IMR-90 (cell line): ENCODE measurements at regions of chr18 and their contacts with region 1.

Region 1: GRCh38 chr18:50819728-50820378 is at the start of gene MRO:
- DNase-seq: peak; percentile 60
- ATAC-seq: peak; percentile 97
- H3K4me3 ChIP-seq: peak within 1 kb of the TSS; percentile 26
- H3K27ac ChIP-seq: no peak within 1 kb of the TSS
- H3K4me1 ChIP-seq: no peaks in the 10 kb centered on the region
- H3K27me3 ChIP-seq: peaks cover 6% of the 10 kb centered on the region
- CTCF ChIP-seq: peak; percentile 94
- POLR2A ChIP-seq: 0 out of 2 replicates have a peak, but pooled peaks have one; percentile 38
- RAD21 ChIP-seq: peak; percentile 96
- total RNA-seq, gene MRO: not detected in 2 replicates

Region 2: DNA sequence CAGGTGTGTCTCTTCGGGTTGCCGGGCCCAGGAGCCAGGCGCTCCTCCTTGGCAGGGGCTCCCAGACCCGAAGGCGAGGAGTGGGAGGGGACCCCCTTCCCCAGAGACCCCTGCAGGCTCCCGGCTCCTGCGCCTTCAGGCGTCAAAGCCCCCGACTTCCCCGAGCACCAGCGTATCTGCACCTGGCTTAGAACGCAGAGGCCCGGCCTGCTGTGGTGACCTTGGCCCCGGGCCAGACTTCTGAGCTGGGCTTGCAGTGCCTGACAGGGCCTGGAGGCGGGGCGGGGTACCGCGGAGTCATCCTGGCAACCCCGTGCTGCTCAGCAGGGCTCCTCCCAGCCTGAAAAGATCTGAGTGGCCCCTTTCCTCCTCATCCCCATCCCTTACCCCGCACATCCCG is 418.0 kb before region 1 on chr18:
- CTCF ChIA-PET with region 1: no interaction called
- POLR2A ChIA-PET with region 1: no interaction called
- dilution Hi-C with region 1: no loop called
- in situ Hi-C with region 1: no loop called
- intact Hi-C with region 1: no loop called
- DNase-seq: peak; percentile 7
- ATAC-seq: peak; percentile 29; the same call in 1 of the 2 replicates
- H3K4me3 ChIP-seq: no peak overlapping the region
- H3K27ac ChIP-seq: no peak overlapping the region
- H3K4me1 ChIP-seq: no peaks in the 10 kb centered on the region
- H3K27me3 ChIP-seq: peaks cover 20% of the 10 kb centered on the region
- CTCF ChIP-seq: no peak
- POLR2A ChIP-seq: no peak
- RAD21 ChIP-seq: no peak

Region 3: DNA sequence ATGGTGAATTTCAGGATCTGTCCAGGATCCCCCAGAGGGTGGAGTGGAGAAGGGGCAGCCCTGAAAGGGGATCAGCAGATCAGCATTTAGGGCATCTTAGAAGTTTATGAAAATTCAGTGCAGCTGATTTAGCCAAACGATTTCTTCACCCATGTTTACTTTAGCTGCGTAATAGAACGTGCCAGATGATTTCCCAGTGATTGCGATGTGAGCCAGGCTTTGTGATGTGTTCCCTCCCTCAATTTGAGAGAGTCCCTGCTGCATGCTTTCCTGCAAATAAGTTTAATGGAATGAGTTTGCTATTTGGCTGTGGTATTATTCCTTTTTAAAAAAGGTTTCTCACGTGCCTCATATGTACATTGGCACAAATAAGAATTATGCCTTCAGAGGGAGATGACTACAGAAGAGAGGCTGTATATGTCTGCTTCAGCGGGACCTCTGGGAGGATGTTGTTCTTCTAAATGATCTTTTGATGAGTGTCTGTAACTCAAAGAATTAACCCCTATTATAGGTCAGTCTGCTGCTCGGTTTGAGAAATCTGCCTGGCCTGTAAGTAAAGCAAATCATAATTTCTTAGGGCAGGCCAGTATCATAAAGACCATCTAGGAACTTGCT is 111.9 kb before region 1 on chr18:
- CTCF ChIA-PET with region 1: no interaction called
- POLR2A ChIA-PET with region 1: no interaction called
- dilution Hi-C with region 1: no loop called
- in situ Hi-C with region 1: no loop called
- intact Hi-C with region 1: no loop called
- DNase-seq: peak; percentile 14
- ATAC-seq: peak; percentile 35
- H3K4me3 ChIP-seq: no peak overlapping the region
- H3K27ac ChIP-seq: no peak overlapping the region
- H3K4me1 ChIP-seq: no peaks in the 10 kb centered on the region
- H3K27me3 ChIP-seq: no peaks in the 10 kb centered on the region
- CTCF ChIP-seq: no peak
- POLR2A ChIP-seq: no peak
- RAD21 ChIP-seq: no peak

Region 4: GRCh38 chr18:50866765-50867164 is 46.9 kb after region 1 on chr18:
- CTCF ChIA-PET with region 1: no interaction called
- POLR2A ChIA-PET with region 1: no interaction called
- dilution Hi-C with region 1: no loop called
- in situ Hi-C with region 1: no loop called
- intact Hi-C with region 1: loop called (anchors 2 kb)
- DNase-seq: no peak
- ATAC-seq: 0 out of 2 replicates have a peak, but pooled peaks have one; percentile 31
- H3K4me3 ChIP-seq: no peak overlapping the region
- H3K27ac ChIP-seq: no peak overlapping the region
- H3K4me1 ChIP-seq: peaks cover 3% of the 10 kb centered on the region; the same call in 1 of the 2 replicates
- H3K27me3 ChIP-seq: no peaks in the 10 kb centered on the region
- CTCF ChIP-seq: 0 out of 2 replicates have a peak, but pooled peaks have one; percentile 7
- POLR2A ChIP-seq: no peak
- RAD21 ChIP-seq: no peak

Region 5: DNA sequence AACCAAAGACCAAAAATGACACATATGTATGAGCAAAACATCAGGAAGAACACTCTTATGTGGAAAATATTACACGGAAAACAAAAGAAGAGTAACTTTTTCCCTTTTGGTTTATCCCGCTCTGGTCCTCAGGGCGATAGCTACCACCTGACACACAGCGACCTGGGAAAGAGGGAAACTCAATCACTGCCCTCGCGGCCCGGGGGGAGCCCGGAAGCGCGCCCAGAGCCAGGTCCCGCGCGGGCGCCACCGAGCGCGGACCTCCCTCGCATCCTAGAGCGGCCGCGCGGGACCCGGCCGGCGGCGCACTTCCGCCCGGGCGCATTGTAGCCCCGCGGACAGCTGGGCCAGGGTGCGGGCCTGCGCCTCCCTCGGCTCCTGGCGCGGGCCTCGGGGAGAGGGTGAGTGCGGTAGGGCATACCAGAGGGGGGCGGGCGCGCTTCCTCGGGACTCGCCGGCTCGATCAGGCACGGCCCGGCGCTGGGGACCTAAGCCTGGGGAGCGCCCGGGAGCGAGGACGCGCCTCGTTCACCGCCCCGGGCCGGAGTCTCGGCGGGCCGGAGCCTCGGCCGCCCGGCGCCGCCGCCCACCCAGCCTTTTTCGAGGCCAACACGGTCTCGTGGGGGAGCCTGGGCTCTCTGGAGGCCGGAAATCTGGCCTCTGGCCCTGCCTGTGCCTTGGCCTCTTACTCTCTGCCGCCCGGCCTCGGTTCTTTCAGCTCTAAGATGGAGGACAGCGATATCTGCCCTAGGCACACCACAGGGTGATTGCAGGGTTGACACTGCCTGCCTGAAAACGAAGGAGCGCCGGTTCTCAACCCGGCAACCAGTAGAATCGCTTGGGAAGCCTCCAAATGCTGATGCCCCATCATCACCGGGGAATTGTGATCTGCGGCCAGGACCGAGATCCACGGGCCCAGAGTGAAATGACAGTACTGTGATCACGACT is 148.1 kb after region 1 on chr18 and contains the start of gene ELAC1:
- CTCF ChIA-PET with region 1: no interaction called
- POLR2A ChIA-PET with region 1: no interaction called
- dilution Hi-C with region 1: no loop called
- in situ Hi-C with region 1: no loop called
- intact Hi-C with region 1: loop called (anchors 2 kb)
- DNase-seq: peak; percentile 76
- ATAC-seq: peak; percentile 97
- H3K4me3 ChIP-seq: peak within 1 kb of the TSS; percentile 61
- H3K27ac ChIP-seq: peak within 1 kb of the TSS; percentile 83
- H3K4me1 ChIP-seq: peaks cover 3% of the 10 kb centered on the region; the same call in 1 of the 2 replicates
- H3K27me3 ChIP-seq: no peaks in the 10 kb centered on the region
- CTCF ChIP-seq: 0 out of 2 replicates have a peak, but pooled peaks have one; percentile 0
- POLR2A ChIP-seq: peak; percentile 92
- RAD21 ChIP-seq: no peak
- total RNA-seq, gene ELAC1: 5.2 and 6.4 TPM in 2 replicates

Region 6: GRCh38 chr18:51029694-51030536 is 210.1 kb after region 1 on chr18 and contains the start of gene SMAD4:
- CTCF ChIA-PET with region 1: interaction called, 3 read pairs
- POLR2A ChIA-PET with region 1: no interaction called
- dilution Hi-C with region 1: no loop called
- in situ Hi-C with region 1: no loop called
- intact Hi-C with region 1: loop called (anchors 5 kb)
- DNase-seq: peak; percentile 94
- ATAC-seq: peak; percentile 95
- H3K4me3 ChIP-seq: peak within 1 kb of the TSS; percentile 78
- H3K27ac ChIP-seq: peak within 1 kb of the TSS; percentile 96
- H3K4me1 ChIP-seq: peaks cover 5% of the 10 kb centered on the region
- H3K27me3 ChIP-seq: no peaks in the 10 kb centered on the region
- CTCF ChIP-seq: no peak
- POLR2A ChIP-seq: peak; percentile 90
- RAD21 ChIP-seq: no peak
- total RNA-seq, gene SMAD4: 145 and 194 TPM in 2 replicates

Region 7: DNA sequence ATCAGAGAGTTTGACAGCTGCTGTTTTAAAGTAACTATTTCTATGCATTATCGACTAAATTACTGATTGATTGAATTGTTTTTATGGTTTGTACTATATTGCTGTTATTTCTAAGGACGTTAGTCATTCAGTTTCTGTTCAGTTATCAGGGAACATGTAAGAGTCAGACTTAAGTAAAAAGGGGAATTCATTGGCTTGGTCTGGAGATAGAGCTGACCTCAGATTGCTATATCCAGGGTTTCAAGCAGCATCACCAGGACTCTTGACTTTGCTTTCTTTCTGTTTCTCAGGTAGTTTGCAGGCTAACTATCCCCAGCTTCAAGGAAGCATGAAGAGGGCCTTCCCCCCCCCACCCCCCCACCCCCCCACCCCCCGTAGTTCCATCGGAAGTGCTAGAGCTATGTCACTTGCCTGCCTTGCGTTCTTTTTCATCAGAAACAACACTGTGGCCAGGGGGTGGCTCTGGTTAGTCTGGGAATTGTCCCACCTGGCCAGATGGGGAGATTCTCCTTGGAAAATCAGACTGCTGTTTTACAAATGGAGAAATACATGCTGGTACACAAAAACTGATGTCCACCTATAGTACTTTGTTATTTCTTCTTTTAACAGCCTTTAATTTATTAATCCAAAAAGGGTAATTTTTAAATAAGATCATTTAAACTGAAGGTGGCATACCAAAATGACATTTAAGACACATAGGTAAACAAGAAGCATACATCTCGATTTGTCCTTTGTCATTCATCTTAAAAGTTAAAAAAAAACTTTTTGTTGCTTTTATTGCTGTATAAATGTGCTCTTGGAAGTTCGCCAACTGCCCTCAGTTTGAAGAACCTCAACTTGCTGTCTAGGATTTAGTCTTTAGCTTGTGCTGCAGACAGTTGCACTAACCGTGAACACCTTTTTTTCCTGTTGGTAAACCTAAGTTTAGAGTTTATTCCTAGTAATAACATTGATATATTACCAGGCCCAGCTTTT is 219.6 kb after region 1 on chr18:
- CTCF ChIA-PET with region 1: no interaction called
- POLR2A ChIA-PET with region 1: no interaction called
- dilution Hi-C with region 1: no loop called
- in situ Hi-C with region 1: loop called (anchors 10 kb)
- intact Hi-C with region 1: loop called (anchors 5 kb)
- DNase-seq: peak; percentile 46
- ATAC-seq: no peak
- H3K4me3 ChIP-seq: no peak overlapping the region
- H3K27ac ChIP-seq: no peak overlapping the region
- H3K4me1 ChIP-seq: peaks cover 6% of the 10 kb centered on the region
- H3K27me3 ChIP-seq: no peaks in the 10 kb centered on the region
- CTCF ChIP-seq: no peak
- POLR2A ChIP-seq: no peak
- RAD21 ChIP-seq: no peak

Region 8: GRCh38 chr18:51051105-51051712 is 231.4 kb after region 1 on chr18:
- CTCF ChIA-PET with region 1: interaction called, 3 read pairs
- POLR2A ChIA-PET with region 1: no interaction called
- dilution Hi-C with region 1: no loop called
- in situ Hi-C with region 1: loop called (anchors 10 kb)
- intact Hi-C with region 1: loop called (anchors 1 kb)
- DNase-seq: peak; percentile 65
- ATAC-seq: peak; percentile 95
- H3K4me3 ChIP-seq: no peak overlapping the region
- H3K27ac ChIP-seq: no peak overlapping the region
- H3K4me1 ChIP-seq: peaks cover 2% of the 10 kb centered on the region; the same call in 1 of the 2 replicates
- H3K27me3 ChIP-seq: no peaks in the 10 kb centered on the region
- CTCF ChIP-seq: peak; percentile 75
- POLR2A ChIP-seq: no peak
- RAD21 ChIP-seq: peak; percentile 74

Region 9: DNA sequence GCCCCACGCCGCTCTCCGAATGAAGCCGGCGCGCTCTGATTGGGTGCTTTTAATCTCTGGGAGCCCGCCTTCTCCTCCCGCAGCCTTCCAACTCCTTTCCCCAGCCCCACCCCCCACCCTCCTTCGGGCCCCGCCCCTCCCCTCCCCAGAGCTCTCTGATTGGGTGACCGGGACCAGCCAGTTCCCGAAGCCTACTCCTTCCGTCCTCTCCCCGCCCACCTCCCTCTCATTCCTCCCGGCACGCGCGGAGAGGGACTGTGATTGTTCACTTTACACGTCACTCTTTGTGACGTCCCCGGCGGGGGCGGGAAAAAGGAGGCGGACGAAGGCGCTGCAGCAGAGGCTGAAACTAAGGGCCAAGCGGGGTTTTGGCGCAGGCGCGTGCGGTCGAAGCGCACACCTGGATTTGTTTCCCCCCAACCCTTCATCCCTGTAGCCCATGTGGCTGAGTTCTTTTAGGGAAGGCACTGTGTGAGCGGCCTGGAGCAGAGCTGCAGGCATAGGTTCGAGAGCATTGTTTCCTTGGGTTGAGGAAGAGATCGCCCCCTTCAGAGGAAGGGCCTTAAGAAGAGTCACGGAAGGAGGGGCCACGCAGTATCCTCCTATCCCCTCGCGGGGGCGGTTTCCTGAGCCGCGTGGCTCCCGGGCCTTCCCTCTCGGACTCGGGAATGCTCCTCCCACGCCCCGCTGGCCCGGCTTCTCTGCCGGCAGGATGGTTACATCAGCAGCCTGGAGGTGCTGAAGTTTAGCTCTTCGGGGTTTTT is 378.0 kb after region 1 on chr18 and contains the start of gene MEX3C:
- CTCF ChIA-PET with region 1: no interaction called
- POLR2A ChIA-PET with region 1: no interaction called
- dilution Hi-C with region 1: no loop called
- in situ Hi-C with region 1: no loop called
- intact Hi-C with region 1: loop called (anchors 5 kb)
- DNase-seq: peak; percentile 99
- ATAC-seq: peak; percentile 88
- H3K4me3 ChIP-seq: peak within 1 kb of the TSS; percentile 98
- H3K27ac ChIP-seq: peak within 1 kb of the TSS; percentile 90
- H3K4me1 ChIP-seq: peaks cover 2% of the 10 kb centered on the region; the same call in 1 of the 2 replicates
- H3K27me3 ChIP-seq: no peaks in the 10 kb centered on the region
- CTCF ChIP-seq: 0 out of 2 replicates have a peak, but pooled peaks have one; percentile 10
- POLR2A ChIP-seq: no peak
- RAD21 ChIP-seq: no peak
- total RNA-seq, gene MEX3C: 42.8 and 50.9 TPM in 2 replicates